Mammary epithelial cell (primary cell): ENCODE measurements at regions of chr2 and their contacts with region 1.

Region 1: GRCh38 chr2:39436592-39437510 is at the start of gene MAP4K3:
- DNase-seq: peak; percentile 94
- H3K4me3 ChIP-seq: peak within 1 kb of the TSS; percentile 81 to 94 (median 89)
- H3K27ac ChIP-seq: peak within 1 kb of the TSS; percentile 82
- H3K4me1 ChIP-seq: peaks cover 35% of the 10 kb centered on the region
- H3K27me3 ChIP-seq: no peaks in the 10 kb centered on the region
- CTCF ChIP-seq: no peak
- total RNA-seq, gene MAP4K3: 25.7 to 43.3 TPM

Region 2: DNA sequence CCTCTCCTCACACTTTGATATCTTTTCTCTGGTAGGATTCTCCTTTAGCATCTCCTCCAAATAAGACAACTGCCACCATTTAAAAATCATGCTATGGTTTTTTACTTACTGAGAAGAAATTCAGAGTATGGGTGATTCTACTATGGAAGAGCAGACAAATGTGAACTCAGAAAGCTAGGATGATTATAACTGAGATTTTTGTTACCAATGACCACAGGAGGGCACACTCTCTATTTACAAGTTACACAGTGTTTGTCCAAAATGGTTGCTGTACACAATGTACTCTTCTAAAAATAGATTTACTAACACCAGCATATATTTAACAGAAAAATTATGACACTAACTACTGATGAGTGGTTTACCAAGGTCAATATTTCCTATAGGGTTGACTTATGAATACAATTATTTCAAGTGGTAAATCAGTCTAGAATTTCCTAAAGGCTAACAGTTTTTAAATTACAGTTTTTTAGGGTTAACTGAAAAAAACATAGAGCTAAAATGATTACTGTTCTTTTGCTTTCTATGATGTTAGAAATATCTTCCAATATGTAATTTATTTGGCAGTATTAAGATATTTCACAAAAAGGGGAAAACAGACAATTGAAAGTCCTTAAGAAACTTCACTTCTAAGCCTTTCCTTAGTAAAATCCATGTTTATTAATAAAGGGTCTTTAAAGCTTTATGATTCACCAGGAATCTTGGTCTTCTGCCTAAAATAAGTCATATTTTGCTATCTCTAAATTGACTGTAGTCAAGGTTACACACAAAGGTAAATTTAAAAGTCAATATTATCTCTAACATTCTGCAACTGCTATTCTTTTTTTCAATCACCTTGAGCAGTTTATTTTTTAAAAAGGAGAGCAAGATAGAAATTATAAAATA is 57.0 kb before region 1 on chr2:
- CTCF ChIA-PET with region 1: interaction called, 3 read pairs
- dilution Hi-C with region 1: no loop called
- in situ Hi-C with region 1: loop called in 1 of 2 experiments (anchors 10 kb)
- intact Hi-C with region 1: loop called (anchors 1 kb)
- DNase-seq: peak; percentile 36
- H3K4me3 ChIP-seq: no peak overlapping the region
- H3K27ac ChIP-seq: peak overlapping the region; percentile 59
- H3K4me1 ChIP-seq: no peaks in the 10 kb centered on the region
- H3K27me3 ChIP-seq: no peaks in the 10 kb centered on the region
- CTCF ChIP-seq: peak; percentile 49 to 61

Region 3: DNA sequence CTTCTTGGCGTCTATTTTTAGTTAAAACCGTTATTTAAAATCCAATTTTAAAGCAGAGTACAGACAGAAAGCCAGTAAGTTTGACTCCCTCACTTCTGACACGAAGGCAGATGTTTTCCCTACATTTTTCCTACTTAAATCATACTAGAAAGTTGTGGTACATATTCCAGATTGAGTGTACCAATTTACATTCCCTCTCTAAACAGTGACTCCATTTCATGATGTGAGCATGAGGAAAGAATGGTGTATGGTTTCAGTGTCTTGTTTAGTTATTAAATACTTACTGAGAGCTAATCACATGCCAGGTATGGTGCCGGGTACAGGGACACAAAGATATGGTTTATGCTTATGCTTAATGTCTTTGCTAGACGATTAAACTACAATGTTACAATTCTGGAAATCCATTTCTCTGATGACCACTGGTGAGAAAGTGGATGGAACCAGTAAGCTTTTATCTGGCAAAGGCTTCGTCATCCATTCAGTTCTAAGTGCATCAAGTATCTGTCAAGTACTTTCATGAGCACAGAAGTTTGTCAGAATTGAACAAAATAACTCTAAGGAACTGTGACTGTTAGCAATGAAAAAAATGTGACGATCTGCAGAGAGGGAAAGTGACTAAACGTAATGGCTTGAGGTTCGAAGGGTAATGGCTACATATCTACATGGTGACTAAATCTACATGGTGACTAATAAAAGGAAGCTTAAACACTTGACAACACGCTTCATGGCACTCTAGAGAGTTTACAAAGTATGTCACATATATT is 25.5 kb before region 1 on chr2:
- CTCF ChIA-PET with region 1: no interaction called
- dilution Hi-C with region 1: no loop called
- in situ Hi-C with region 1: no loop called
- intact Hi-C with region 1: loop called (anchors 2 kb)
- DNase-seq: peak; percentile 75
- H3K4me3 ChIP-seq: peak overlapping the region in 1 of 3 experiments; percentile 10
- H3K27ac ChIP-seq: peak overlapping the region; percentile 61
- H3K4me1 ChIP-seq: peaks cover 19% of the 10 kb centered on the region
- H3K27me3 ChIP-seq: no peaks in the 10 kb centered on the region
- CTCF ChIP-seq: no peak

Region 4: DNA sequence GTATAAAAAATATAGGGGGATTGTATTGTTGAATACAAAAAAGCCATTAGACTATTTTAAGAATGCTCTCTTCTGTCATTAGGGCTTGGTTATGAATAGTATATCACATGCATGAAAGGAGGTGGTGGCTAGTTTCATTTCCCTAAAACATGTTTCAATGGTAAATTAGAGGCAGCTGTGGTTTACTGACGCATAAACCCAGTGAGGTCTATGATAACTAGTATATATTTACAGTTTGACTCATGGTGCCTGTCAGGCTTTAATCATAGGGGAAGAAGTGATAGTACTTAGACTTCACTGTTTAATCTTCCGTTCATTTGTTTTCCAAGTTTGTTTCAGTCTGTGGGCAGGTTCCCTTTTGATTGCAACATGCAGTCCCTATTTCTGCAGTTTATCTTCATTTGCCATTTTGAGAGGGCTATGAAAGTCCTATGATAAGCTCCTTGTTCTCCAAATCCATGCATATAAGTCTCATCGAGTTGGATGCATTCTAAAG is 55.3 kb after region 1 on chr2:
- CTCF ChIA-PET with region 1: no interaction called
- dilution Hi-C with region 1: no loop called
- in situ Hi-C with region 1: no loop called
- intact Hi-C with region 1: loop called (anchors 2 kb)
- DNase-seq: peak; percentile 97
- H3K4me3 ChIP-seq: no peak overlapping the region
- H3K27ac ChIP-seq: peak overlapping the region; percentile 70
- H3K4me1 ChIP-seq: peaks cover 28% of the 10 kb centered on the region
- H3K27me3 ChIP-seq: no peaks in the 10 kb centered on the region
- CTCF ChIP-seq: no peak

Region 5: DNA sequence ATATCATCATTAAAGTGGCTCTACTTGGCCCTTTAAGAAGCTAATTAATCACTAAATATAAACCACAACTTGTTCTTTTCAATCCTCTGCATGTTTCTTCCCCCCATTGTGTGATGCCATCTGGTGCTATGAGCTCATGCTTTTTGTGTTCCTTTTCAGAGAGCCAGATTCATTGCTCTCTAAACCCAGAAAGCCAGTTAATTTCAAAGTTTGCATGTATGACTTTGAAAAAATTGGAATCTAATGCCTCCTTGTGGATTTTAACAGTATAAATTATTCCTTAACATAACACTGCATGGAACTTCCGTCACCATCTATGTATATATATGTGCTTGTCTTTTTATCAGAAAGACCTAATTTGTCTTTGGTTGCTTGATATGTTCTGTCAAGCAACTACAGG is 260.0 kb after region 1 on chr2:
- CTCF ChIA-PET with region 1: no interaction called
- dilution Hi-C with region 1: no loop called
- in situ Hi-C with region 1: no loop called
- intact Hi-C with region 1: loop called (anchors 5 kb)
- DNase-seq: peak; percentile 53
- H3K4me3 ChIP-seq: no peak overlapping the region
- H3K27ac ChIP-seq: no peak overlapping the region
- H3K4me1 ChIP-seq: peaks cover 7% of the 10 kb centered on the region
- H3K27me3 ChIP-seq: no peaks in the 10 kb centered on the region
- CTCF ChIP-seq: peak; percentile 37 to 39